Activated T-helper 2 cell treated with anti-CD3 and anti-CD28 coated beads, Interferon-gamma antibody, Interleukin-2, Interleukin-4, amounts not matched to agents 10 μg/mL and 5 μg/mL and 100 μg/mL, durations not matched to agents 14 hours and 24 hours and 36 hours (primary cell): ENCODE measurements at regions of chrX and their contacts with region 1.

Region 1: GRCh38 chrX:72299891-72300630 is 5.7 kb downstream of the CITED1 start:
- DNase-seq: no peak
- H3K4me3 Mint-ChIP-seq: no peak overlapping the region
- H3K27ac Mint-ChIP-seq: no peak overlapping the region
- H3K4me1 Mint-ChIP-seq: peaks cover 4% of the 10 kb centered on the region
- H3K27me3 Mint-ChIP-seq: peaks cover 60% of the 10 kb centered on the region

Region 2: GRCh38 chrX:72330131-72330530 is 30.1 kb after region 1 on chrX:
- intact Hi-C with region 1: no loop called
- DNase-seq: no peak
- H3K4me3 Mint-ChIP-seq: no peak overlapping the region
- H3K27ac Mint-ChIP-seq: no peak overlapping the region
- H3K4me1 Mint-ChIP-seq: peaks cover 1% of the 10 kb centered on the region
- H3K27me3 Mint-ChIP-seq: no peaks in the 10 kb centered on the region

Region 3: GRCh38 chrX:72394518-72395170 is 94.6 kb after region 1 on chrX:
- intact Hi-C with region 1: no loop called
- DNase-seq: no peak
- H3K4me3 Mint-ChIP-seq: no peak overlapping the region
- H3K27ac Mint-ChIP-seq: no peak overlapping the region
- H3K4me1 Mint-ChIP-seq: no peaks in the 10 kb centered on the region
- H3K27me3 Mint-ChIP-seq: no peaks in the 10 kb centered on the region

Region 4: GRCh38 chrX:72540318-72540717 is 240.3 kb after region 1 on chrX:
- intact Hi-C with region 1: loop called (anchors 2 kb)
- DNase-seq: no peak
- H3K4me3 Mint-ChIP-seq: no peak overlapping the region
- H3K27ac Mint-ChIP-seq: no peak overlapping the region
- H3K4me1 Mint-ChIP-seq: peaks cover 3% of the 10 kb centered on the region
- H3K27me3 Mint-ChIP-seq: no peaks in the 10 kb centered on the region